Spleen (tissue), 13 donors: ENCODE measurements at regions of chr9 and their contacts with region 1.

Region 1: DNA sequence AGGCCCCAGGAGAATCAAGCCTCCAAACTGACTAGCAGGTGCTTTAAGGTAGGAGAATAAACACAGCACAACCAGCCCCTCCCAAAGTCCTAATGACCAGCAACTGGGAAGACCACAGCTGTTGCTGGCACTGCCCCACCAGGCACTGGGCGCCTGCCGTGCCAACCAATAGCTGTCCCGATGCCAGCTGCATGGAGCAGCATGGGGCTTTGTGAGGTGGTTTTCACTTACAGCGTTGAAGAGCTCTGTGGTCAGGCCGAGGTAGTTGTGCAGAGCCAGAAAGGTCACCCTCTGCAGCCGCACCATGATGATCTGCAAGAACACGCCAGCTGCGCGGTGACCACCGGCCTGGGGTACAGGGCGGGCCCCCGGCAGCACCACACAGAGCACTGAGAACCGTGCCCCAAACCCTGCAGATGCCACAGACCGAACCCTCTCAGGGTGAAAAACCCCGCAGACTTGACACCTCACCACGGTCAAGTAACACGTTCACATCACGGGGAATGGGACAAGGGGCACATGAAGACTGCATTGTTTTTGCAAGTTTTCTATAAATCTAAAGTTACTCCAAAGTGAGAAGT is 28.7 kb downstream of the PNPLA7 start:
- DNase-seq: no peak
- H3K4me3 ChIP-seq: no peak overlapping the region
- H3K27ac ChIP-seq: no peak overlapping the region
- H3K4me1 ChIP-seq: peaks cover 0 to 7% (median 3%) of the 10 kb centered on the region in 6 donors
- H3K27me3 ChIP-seq: no peaks in the 10 kb centered on the region
- CTCF ChIP-seq: no peak
- POLR2A ChIP-seq: no peak

Region 2: GRCh38 chr9:137295238-137295811 is 226.2 kb before region 1 on chr9:
- intact Hi-C with region 1: loop called (anchors 10 kb)
- DNase-seq: peak; percentile 89
- H3K4me3 ChIP-seq: peak overlapping the region in 7 of 8 donors; percentile 24 to 75 (median 41)
- H3K27ac ChIP-seq: peak overlapping the region in 4 of 8 donors; percentile 63 to 82 (median 73)
- H3K4me1 ChIP-seq: peaks cover 16 to 63% (median 45%) of the 10 kb centered on the region in 6 donors
- H3K27me3 ChIP-seq: peaks cover 2 to 78% (median 44%) of the 10 kb centered on the region in 7 donors
- CTCF ChIP-seq: peak in 7 of 11 experiments; percentile 27 to 88 (median 77)
- POLR2A ChIP-seq: no peak

Region 3: GRCh38 chr9:137423004-137423874 is 98.3 kb before region 1 on chr9 and contains the starts of genes EXD3 and NOXA1:
- intact Hi-C with region 1: loop called (anchors 5 kb)
- DNase-seq: peak; percentile 98
- H3K4me3 ChIP-seq: peak within 1 kb of the TSS; percentile 81 to 99 (median 95)
- H3K27ac ChIP-seq: peak within 1 kb of the TSS; percentile 48 to 88 (median 80)
- H3K4me1 ChIP-seq: peaks cover 10 to 58% (median 33%) of the 10 kb centered on the region in 6 donors
- H3K27me3 ChIP-seq: peaks cover 0 to 5% (median 0%) of the 10 kb centered on the region in 7 donors
- CTCF ChIP-seq: peak in 10 of 11 experiments; percentile 49 to 95 (median 80)
- POLR2A ChIP-seq: peak in 1 of 3 donors; percentile 76
- total RNA-seq, gene EXD3: 14.5 to 52.8 (median 29.8) TPM
- total RNA-seq, gene NOXA1: 1.9 to 15.0 (median 5.3) TPM